ENCODE measurements at regions of chr11 and their contacts with region 1.

Region 1: DNA sequence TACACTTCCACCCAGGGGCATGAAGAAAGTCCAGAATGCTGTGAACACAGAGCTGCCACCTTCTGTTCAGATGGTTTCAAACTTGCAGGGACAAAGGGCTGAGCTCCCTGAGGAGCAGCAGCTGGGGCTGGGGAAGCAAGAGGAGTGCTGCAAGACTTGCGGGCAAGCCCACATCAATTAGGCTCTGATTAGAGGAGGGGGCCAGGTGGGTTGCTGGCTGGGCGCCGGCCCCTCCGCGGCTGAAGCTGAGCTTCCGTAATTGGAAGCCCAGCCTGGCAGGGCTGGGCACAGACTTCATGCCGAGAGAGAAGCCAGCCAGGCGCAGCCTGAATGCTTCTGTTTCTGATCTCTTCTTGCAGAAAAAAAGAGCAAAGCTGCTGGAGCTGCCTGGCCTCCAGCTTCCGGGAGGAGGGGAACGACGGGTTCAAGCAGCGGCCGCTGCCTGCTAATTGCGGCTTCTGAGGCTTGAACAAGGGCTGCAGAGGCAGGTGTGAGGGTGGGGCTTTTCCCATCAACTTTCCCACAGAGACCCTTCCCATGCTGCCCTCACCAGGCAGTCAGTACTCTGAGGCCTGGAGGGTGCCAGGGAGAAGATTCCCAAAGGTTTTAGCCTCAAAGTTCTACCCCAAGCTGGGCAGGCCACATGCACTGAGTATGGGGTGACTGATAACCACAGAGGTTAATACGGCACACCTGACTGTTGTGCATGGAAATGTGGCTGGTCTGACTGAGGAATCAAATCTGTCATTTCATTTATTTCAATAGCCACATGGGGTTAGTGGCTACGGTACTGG is 91.1 kb upstream of the LMO1 start:
- DNase-seq: no peak
- H3K4me3 ChIP-seq: no peak overlapping the region
- H3K27ac ChIP-seq: no peak overlapping the region
- H3K4me1 ChIP-seq: no peaks in the 10 kb centered on the region; a peak in 2 of 7 replicates
- H3K27me3 ChIP-seq: no peaks in the 10 kb centered on the region; a peak in 2 of 7 replicates
- CTCF ChIP-seq: no peak
- EP300 ChIP-seq: no peak
- POLR2A ChIP-seq: no peak
- RAD21 ChIP-seq: no peak

Region 2: DNA sequence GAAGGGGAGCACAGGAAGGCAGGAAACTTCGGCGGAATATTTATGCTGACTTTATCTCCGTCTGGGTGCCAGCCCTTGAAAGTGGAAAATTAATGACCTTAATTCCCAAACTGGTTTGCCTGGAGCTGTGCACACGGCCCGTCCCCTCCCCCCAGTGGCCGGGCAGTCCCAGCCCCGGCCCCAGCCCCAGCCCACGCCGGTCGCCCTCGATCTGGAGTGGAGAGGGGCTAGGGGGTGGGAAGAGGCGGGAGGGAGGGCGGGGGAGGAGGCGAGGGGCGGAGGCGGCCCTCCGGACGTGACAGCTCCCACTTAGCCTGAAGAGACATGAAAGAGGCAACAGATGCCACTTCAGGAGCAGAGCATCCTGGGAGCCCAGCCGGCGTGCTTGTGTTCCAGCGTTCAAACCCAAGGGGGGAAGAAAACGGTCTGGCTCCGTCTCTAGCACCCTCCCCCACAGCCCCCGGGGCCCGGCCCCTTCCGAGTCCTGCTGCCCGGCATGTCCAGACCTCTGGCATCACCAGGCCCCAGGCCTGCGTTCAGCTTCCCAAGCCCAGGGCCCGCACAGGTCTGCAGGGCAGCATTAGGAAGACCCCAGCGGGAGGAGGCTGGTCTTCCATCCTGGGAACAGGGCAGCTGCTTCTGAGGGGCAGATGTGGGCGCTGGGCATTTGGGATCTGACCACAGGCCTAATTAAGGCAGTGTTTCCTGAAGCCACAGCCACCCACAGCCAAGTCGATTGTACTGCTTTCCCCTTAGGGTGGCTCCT is 71.2 kb before region 1 on chr11:
- CTCF ChIA-PET with region 1: no interaction called
- POLR2A ChIA-PET with region 1: no interaction called
- DNase-seq: peak in 1 of 2 experiments; percentile 74
- H3K4me3 ChIP-seq: peak overlapping the region; percentile 6 to 64 (median 40)
- H3K27ac ChIP-seq: no peak overlapping the region
- H3K4me1 ChIP-seq: peaks cover 0 to 11% (median 8%) of the 10 kb centered on the region in 4 experiments; a peak in 6 of 7 replicates
- H3K27me3 ChIP-seq: peaks cover 0 to 10% (median 0%) of the 10 kb centered on the region in 4 experiments; a peak in 4 of 7 replicates
- CTCF ChIP-seq: no peak
- EP300 ChIP-seq: no peak
- POLR2A ChIP-seq: no peak
- RAD21 ChIP-seq: no peak

Region 3: DNA sequence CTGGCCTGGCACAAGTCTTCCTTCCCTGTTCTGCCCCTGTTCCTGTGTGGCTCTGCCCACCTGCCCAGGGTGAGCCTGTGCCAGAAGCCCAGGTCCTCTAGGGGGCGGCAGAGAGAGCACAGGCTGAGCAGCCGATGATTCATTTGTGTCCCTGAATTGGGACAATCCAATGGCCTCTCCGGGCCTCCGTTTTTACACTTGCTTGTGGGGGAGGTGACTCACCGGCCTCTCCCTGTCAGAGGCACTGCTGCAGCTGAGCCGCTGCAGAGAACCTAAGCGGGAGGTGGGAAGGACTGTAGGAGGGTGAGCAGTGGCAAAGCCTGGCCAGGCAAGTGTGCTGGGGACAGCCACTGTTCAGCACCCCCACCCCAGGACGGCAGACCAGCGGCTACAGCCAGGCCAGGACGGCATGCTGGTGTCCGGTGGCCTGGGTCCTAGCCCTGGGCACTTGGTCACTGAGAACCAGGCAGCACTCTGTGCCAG is 25.9 kb before region 1 on chr11:
- CTCF ChIA-PET with region 1: interaction called, 34 read pairs
- POLR2A ChIA-PET with region 1: no interaction called
- DNase-seq: peak; percentile 72 to 95
- H3K4me3 ChIP-seq: peak overlapping the region in 1 of 4 experiments; percentile 36; a peak in 1 of 8 replicates
- H3K27ac ChIP-seq: no peak overlapping the region
- H3K4me1 ChIP-seq: peaks cover 5 to 25% (median 12%) of the 10 kb centered on the region in 4 experiments
- H3K27me3 ChIP-seq: no peaks in the 10 kb centered on the region; a peak in 1 of 7 replicates
- CTCF ChIP-seq: peak; percentile 80 to 92 (median 90)
- EP300 ChIP-seq: peak in 1 of 2 experiments; percentile 51; a peak in 1 of 3 replicates
- POLR2A ChIP-seq: no peak
- RAD21 ChIP-seq: peak; percentile 55 to 68

Region 4: DNA sequence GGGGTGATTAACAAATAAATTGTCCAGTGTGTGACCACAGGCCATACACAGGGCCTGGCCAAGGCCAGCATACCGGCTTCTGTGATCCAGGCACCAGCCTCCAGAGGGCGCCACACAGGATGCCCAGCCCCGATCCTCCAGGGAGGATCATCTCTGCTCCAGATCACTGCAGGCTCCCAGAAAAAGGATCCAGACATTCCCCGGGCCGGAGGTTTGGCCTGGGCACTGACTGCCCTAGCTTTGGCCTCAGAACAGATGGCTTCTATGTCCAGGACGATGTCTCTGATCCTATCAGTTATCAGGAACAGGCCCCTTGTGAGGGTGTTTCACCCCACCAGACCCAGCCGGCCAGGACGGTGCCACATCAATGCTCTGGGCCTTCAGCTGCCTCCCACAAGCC is 16.7 kb before region 1 on chr11:
- CTCF ChIA-PET with region 1: interaction called, 95 read pairs
- POLR2A ChIA-PET with region 1: no interaction called
- DNase-seq: peak in 1 of 2 experiments; percentile 92
- H3K4me3 ChIP-seq: no peak overlapping the region
- H3K27ac ChIP-seq: no peak overlapping the region
- H3K4me1 ChIP-seq: peaks cover 0 to 12% (median 6%) of the 10 kb centered on the region in 4 experiments; a peak in 5 of 7 replicates
- H3K27me3 ChIP-seq: no peaks in the 10 kb centered on the region
- CTCF ChIP-seq: peak; percentile 77 to 93 (median 88)
- EP300 ChIP-seq: no peak
- POLR2A ChIP-seq: no peak
- RAD21 ChIP-seq: peak; percentile 63 to 71

Region 5: DNA sequence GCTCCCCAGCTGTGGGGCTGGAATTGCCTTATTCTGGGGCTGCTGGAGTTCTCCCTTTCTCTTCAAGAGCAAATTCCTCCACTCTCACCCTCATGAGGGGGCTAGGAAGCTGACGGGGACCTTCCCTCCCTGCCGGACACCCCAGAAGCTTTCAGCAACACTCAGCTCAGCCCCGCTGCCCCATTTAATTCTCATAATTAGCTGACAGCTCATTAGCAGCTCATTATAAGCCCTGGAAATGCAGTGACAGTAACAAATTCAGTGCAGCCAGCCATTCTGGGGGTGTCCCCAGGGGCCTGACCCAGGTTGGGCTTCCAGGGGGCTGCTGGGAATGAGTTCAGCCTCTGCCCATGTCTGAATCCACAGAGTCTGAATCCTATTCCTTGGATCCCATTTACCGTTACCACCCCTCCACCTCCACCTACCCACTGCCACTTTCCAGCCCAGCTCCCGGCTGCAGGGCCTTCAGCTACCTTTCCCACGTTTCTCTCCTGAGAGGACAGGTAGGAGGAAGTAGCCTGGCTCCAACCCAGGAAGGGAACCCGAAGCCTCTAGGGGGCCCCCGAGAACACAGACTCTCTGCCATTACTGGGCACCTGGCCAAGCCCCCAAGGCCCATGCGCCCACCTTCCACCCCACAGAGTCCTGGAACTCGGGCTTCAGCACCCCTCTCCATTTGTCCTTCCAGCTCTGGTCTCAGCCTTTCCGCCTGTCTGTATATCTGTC is 10.6 kb after region 1 on chr11:
- CTCF ChIA-PET with region 1: interaction called, 18 read pairs
- POLR2A ChIA-PET with region 1: interaction called, 3 read pairs
- DNase-seq: peak in 1 of 2 experiments; percentile 71
- H3K4me3 ChIP-seq: no peak overlapping the region
- H3K27ac ChIP-seq: no peak overlapping the region
- H3K4me1 ChIP-seq: no peaks in the 10 kb centered on the region
- H3K27me3 ChIP-seq: no peaks in the 10 kb centered on the region
- CTCF ChIP-seq: peak; percentile 12 to 38 (median 30)
- EP300 ChIP-seq: no peak
- POLR2A ChIP-seq: no peak
- RAD21 ChIP-seq: peak; percentile 21 to 38; a peak in 2 of 4 replicates

Region 6: GRCh38 chr11:8373521-8374432 is 19.0 kb after region 1 on chr11:
- CTCF ChIA-PET with region 1: interaction called, 18 read pairs
- POLR2A ChIA-PET with region 1: interaction called, 3 read pairs
- DNase-seq: no peak
- H3K4me3 ChIP-seq: no peak overlapping the region
- H3K27ac ChIP-seq: no peak overlapping the region
- H3K4me1 ChIP-seq: peaks cover 0 to 2% (median 0%) of the 10 kb centered on the region in 4 experiments; a peak in 1 of 7 replicates
- H3K27me3 ChIP-seq: no peaks in the 10 kb centered on the region
- CTCF ChIP-seq: no peak
- EP300 ChIP-seq: no peak
- POLR2A ChIP-seq: no peak
- RAD21 ChIP-seq: no peak